ENCODE measurements at regions of chr22 and their contacts with region 1.

Region 1: DNA sequence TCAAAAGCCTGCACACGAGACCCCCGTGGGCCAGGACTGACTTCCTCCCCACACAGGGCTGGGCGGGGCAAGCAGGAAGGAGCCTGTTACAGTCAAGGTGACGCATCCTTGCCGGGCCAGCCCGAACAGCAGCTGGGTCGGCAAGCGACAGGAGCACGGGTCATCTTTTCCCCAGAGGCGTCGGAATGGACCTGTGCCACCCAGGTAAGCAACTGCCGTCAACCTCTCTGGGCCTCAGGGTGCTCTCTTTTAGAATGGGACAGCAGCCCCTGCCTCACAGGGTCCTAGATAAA is at the start of gene CYTH4:
- DNase-seq: peak; percentile 82
- ATAC-seq: peak; percentile 58
- H3K4me3 ChIP-seq: peak within 1 kb of the TSS; percentile 82 to 100 (median 99)
- H3K4me3 Mint-ChIP-seq: peak within 1 kb of the TSS; percentile 89
- H3K27ac ChIP-seq: peak within 1 kb of the TSS; percentile 79 to 83
- H3K27ac Mint-ChIP-seq: peak within 1 kb of the TSS; percentile 97
- H3K4me1 ChIP-seq: peaks cover 36 to 73% of the 10 kb centered on the region in 2 donors
- H3K4me1 Mint-ChIP-seq: peaks cover 81% of the 10 kb centered on the region
- H3K27me3 ChIP-seq: no peaks in the 10 kb centered on the region
- H3K27me3 Mint-ChIP-seq: no peaks in the 10 kb centered on the region
- CTCF ChIP-seq: no peak
- total RNA-seq, gene CYTH4: 92.2 and 98.0 TPM in 2 replicates

Region 2: GRCh38 chr22:37295213-37295886 is 13.0 kb after region 1 on chr22:
- CTCF ChIA-PET with region 1: interaction called, 12 read pairs
- POLR2A ChIA-PET with region 1: interaction called, 3 read pairs
- intact Hi-C with region 1: no loop called
- DNase-seq: peak; percentile 50
- ATAC-seq: peak; percentile 66
- H3K4me3 ChIP-seq: no peak overlapping the region
- H3K4me3 Mint-ChIP-seq: peak overlapping the region; percentile 26
- H3K27ac ChIP-seq: peak overlapping the region in 1 of 2 donors; percentile 36
- H3K27ac Mint-ChIP-seq: peak overlapping the region; percentile 77
- H3K4me1 ChIP-seq: peaks cover 26 to 50% of the 10 kb centered on the region in 2 donors
- H3K4me1 Mint-ChIP-seq: peaks cover 49% of the 10 kb centered on the region
- H3K27me3 ChIP-seq: no peaks in the 10 kb centered on the region
- H3K27me3 Mint-ChIP-seq: no peaks in the 10 kb centered on the region
- CTCF ChIP-seq: no peak

Region 3: GRCh38 chr22:37309211-37310074 is 27.1 kb after region 1 on chr22:
- CTCF ChIA-PET with region 1: interaction called, 12 read pairs
- POLR2A ChIA-PET with region 1: interaction called, 5 read pairs
- intact Hi-C with region 1: no loop called
- DNase-seq: peak; percentile 43
- ATAC-seq: peak; percentile 9
- H3K4me3 ChIP-seq: peak overlapping the region in 1 of 5 experiments; percentile 1
- H3K4me3 Mint-ChIP-seq: peak overlapping the region; percentile 64
- H3K27ac ChIP-seq: peak overlapping the region; percentile 50 to 52
- H3K27ac Mint-ChIP-seq: peak overlapping the region; percentile 91
- H3K4me1 ChIP-seq: peaks cover 57 to 77% of the 10 kb centered on the region in 2 donors
- H3K4me1 Mint-ChIP-seq: peaks cover 76% of the 10 kb centered on the region
- H3K27me3 ChIP-seq: no peaks in the 10 kb centered on the region
- H3K27me3 Mint-ChIP-seq: no peaks in the 10 kb centered on the region
- CTCF ChIP-seq: no peak